Esophagus muscularis mucosa (tissue), 4 donors: ENCODE measurements at regions of chr10 and their contacts with region 1.

Region 1: GRCh38 chr10:77011874-77012811 is 625.5 kb downstream of the KCNMA1 start:
- DNase-seq: no peak
- H3K4me3 ChIP-seq: no peak overlapping the region
- H3K27ac ChIP-seq: peak overlapping the region; percentile 56 to 65 (median 58)
- H3K4me1 ChIP-seq: peaks cover 10 to 30% (median 25%) of the 10 kb centered on the region in 4 donors
- H3K27me3 ChIP-seq: no peaks in the 10 kb centered on the region
- CTCF ChIP-seq: no peak
- EP300 ChIP-seq: no peak
- POLR2A ChIP-seq: no peak

Region 2: GRCh38 chr10:77104459-77104980 is 92.4 kb after region 1 on chr10:
- intact Hi-C with region 1: loop called (anchors 10 kb)
- DNase-seq: peak; percentile 95
- H3K4me3 ChIP-seq: no peak overlapping the region
- H3K27ac ChIP-seq: peak overlapping the region; percentile 60 to 78 (median 67)
- H3K4me1 ChIP-seq: peaks cover 0 to 44% (median 40%) of the 10 kb centered on the region in 4 donors
- H3K27me3 ChIP-seq: no peaks in the 10 kb centered on the region
- CTCF ChIP-seq: no peak
- EP300 ChIP-seq: no peak
- POLR2A ChIP-seq: no peak

Region 3: DNA sequence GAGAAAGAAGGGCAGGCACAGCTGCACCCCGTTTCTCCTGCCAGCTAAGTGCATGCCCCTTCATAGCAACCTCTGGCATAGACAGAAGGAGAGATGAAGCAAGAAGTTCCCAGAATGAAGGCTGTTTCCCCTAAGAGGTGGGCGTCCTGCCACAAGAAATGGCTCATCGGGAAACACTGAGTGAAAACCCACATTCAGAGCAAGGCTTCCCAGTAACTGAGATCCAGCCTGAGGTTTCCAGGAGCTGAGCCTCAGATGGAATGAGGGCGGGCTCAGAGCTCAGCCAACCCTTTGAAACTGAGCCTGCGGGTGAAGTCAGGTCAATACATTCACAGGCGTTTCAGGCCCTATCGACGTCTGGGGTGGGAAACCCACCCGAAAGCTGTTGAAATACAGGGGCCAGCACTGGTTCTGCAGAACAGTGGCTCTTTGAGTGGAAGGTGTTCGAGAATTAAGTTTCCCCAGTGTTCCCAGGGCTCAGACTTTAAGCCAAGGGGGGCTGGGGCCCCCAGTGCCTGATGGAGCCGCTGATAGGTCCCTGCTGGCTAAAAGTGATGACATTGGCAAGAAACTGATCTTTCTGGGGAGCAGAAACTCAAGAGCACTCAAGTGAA is 1531.7 kb after region 1 on chr10:
- intact Hi-C with region 1: no loop called
- DNase-seq: peak; percentile 96
- H3K4me3 ChIP-seq: no peak overlapping the region
- H3K27ac ChIP-seq: peak overlapping the region; percentile 39 to 84 (median 46)
- H3K4me1 ChIP-seq: peaks cover 10 to 53% (median 52%) of the 10 kb centered on the region in 4 donors
- H3K27me3 ChIP-seq: no peaks in the 10 kb centered on the region
- CTCF ChIP-seq: no peak
- EP300 ChIP-seq: peak; percentile 98
- POLR2A ChIP-seq: no peak